Transverse colon (tissue), 4 donors: ENCODE measurements at regions of chr10 and their contacts with region 1.

Region 1: DNA sequence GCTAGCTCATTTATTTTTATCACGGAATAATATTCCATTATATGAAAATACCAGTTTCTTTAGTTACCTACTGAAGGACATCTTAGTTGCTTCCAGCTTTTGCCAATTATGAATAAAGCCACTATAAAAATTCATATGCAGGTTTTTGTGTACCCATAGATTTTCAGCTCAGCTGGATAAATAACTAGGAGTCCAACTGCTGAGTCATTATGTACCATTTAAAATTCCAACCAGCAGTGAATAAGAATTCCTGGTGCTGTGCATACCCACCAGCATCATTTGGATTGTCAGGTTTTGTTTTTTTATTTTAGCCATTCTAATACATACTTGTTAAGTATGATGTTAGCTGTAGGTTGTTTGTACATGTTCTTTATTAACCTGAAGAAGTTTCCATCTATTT is 14.5 kb downstream of the FAM24B start:
- DNase-seq: no peak
- H3K4me3 ChIP-seq: no peak overlapping the region
- H3K27ac ChIP-seq: no peak overlapping the region
- H3K4me1 ChIP-seq: peaks cover 0 to 10% (median 0%) of the 10 kb centered on the region in 4 donors
- H3K27me3 ChIP-seq: no peaks in the 10 kb centered on the region
- CTCF ChIP-seq: no peak
- EP300 ChIP-seq: no peak
- POLR2A ChIP-seq: no peak

Region 2: DNA sequence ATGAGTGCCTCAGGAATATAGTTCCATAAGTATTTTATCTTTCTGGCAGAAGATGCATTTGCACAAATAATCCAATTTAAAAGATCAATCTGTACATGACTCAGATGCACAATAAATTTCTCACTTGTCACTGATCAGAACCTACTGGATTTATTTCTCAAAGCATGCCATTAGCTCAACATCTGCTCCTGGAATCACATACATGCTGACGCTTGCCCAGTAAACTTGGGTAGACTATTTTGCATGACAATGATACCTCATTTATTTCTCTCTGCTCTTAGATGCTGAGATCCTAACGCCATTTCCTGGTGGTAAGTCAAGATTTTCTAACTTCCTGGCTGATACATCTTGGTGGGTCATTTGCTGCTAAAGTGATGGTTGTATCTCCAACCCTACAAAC is 131.5 kb before region 1 on chr10:
- in situ Hi-C with region 1: no loop called
- intact Hi-C with region 1: no loop called
- DNase-seq: no peak
- H3K4me3 ChIP-seq: no peak overlapping the region
- H3K27ac ChIP-seq: no peak overlapping the region
- H3K4me1 ChIP-seq: no peaks in the 10 kb centered on the region
- H3K27me3 ChIP-seq: peaks cover 2% of the 10 kb centered on the region
- CTCF ChIP-seq: no peak
- EP300 ChIP-seq: no peak
- POLR2A ChIP-seq: no peak

Region 3: GRCh38 chr10:122845783-122846332 is 19.0 kb before region 1 on chr10 and contains the start of gene CUZD1:
- in situ Hi-C with region 1: no loop called
- intact Hi-C with region 1: loop called (anchors 1 kb)
- DNase-seq: no peak
- H3K4me3 ChIP-seq: no peak within 1 kb of the TSS
- H3K27ac ChIP-seq: no peak within 1 kb of the TSS
- H3K4me1 ChIP-seq: no peaks in the 10 kb centered on the region
- H3K27me3 ChIP-seq: no peaks in the 10 kb centered on the region
- CTCF ChIP-seq: no peak
- EP300 ChIP-seq: no peak
- POLR2A ChIP-seq: no peak
- total RNA-seq, gene CUZD1: 0.41 to 1.1 TPM in 2 of 4 donors, not detected in the others

Region 4: DNA sequence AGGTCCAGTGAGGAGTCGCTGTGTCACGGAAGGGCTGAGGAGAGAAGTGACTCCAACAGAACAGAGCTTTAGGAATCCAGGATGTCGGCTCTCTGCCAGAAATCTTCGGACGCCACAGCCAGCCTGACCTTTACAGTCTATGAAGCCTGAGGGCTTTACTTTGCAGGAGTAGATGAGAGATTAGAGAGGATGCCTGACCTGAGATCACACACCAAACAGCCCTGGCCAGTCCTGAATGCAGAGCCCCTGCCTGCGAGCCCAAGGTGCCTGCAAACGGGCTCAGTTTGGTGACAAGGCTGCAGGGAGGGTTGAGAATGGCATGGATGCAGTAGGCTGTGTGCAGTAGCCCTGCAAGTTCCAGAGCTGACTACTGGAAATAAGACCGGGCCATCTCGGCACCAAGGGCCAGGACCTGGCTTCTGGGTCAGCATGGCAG is 879.1 kb after region 1 on chr10:
- in situ Hi-C with region 1: no loop called
- intact Hi-C with region 1: no loop called
- DNase-seq: no peak
- H3K4me3 ChIP-seq: no peak overlapping the region
- H3K27ac ChIP-seq: no peak overlapping the region
- H3K4me1 ChIP-seq: peaks cover 0 to 9% (median 0%) of the 10 kb centered on the region in 4 donors
- H3K27me3 ChIP-seq: no peaks in the 10 kb centered on the region
- CTCF ChIP-seq: no peak
- EP300 ChIP-seq: no peak
- POLR2A ChIP-seq: no peak